AG04449 (cell line): ENCODE measurements at regions of chr20 and their contacts with region 1.

Region 1: DNA sequence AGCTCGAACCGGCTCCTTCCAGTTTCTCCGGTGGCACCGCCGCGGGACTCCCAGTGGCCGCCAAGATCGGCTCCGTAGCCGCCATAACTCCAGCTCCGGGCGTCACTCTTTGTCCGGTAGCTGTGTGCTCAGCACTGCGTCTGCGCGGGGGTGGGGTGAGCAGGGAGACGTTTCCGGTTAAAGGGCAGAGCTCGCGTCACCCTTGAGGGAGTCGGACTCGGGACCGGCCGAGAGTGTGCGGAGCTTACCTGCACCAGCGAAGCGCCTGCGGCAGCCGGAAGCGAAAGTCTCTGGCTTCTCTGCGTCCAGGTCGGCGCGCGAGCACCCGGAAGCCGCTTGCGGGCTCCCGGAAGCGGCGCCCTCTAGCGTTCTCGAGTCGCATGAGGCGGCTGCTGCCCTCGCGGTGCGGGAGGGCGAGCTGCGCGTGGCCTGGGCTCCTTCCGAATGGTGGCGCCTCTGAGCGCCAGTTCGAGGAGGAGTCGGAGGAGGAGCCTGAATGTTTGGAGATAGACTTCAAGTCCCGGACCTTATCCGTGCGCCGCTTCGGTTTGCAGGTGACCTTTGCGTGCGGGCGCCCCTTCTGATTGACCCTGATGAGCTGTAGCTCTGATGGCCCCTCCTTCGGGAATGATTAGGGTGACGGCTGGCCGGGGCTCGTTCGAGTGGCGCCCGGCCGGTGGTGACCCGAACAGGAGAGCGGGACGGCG is at the start of gene SCAND1:
- DNase-seq: peak; percentile 80
- H3K4me3 ChIP-seq: peak within 1 kb of the TSS; percentile 95
- CTCF ChIP-seq: peak; percentile 100

Region 2: GRCh38 chr20:35447082-35447789 is 507.1 kb before region 1 on chr20:
- CTCF ChIA-PET with region 1: no interaction called
- POLR2A ChIA-PET with region 1: no interaction called
- DNase-seq: no peak
- H3K4me3 ChIP-seq: peak overlapping the region; percentile 23; the same call in 1 of the 2 replicates
- CTCF ChIP-seq: peak; percentile 91

Region 3: GRCh38 chr20:35741892-35742740 is 212.2 kb before region 1 on chr20 and contains the start of gene RBM39:
- CTCF ChIA-PET with region 1: interaction called, 9 read pairs
- POLR2A ChIA-PET with region 1: interaction called, 22 read pairs
- DNase-seq: peak; percentile 99
- H3K4me3 ChIP-seq: peak within 1 kb of the TSS; percentile 80
- CTCF ChIP-seq: peak; percentile 73

Region 4: DNA sequence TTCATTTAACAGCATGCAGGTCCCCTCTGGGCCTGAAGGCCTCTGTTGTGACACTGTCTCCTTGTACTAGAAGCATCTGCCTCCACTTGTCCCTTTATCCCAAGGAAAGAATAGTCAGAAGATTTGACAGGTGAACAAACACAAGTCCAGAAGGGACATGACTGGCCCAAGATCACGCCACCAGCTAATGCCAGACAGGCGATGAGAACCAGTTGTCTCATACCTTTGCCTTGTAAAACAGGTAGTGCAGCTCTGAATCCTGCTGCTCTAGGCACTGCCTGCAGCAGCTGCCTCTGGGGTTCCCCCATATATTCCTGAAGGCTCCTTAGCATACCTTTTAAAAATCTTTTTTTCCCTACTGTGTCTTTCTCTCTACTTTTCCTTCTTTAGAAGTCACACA is 25.1 kb before region 1 on chr20:
- CTCF ChIA-PET with region 1: interaction called, 11 read pairs
- POLR2A ChIA-PET with region 1: no interaction called
- DNase-seq: no peak
- H3K4me3 ChIP-seq: no peak overlapping the region
- CTCF ChIP-seq: no peak

Region 5: DNA sequence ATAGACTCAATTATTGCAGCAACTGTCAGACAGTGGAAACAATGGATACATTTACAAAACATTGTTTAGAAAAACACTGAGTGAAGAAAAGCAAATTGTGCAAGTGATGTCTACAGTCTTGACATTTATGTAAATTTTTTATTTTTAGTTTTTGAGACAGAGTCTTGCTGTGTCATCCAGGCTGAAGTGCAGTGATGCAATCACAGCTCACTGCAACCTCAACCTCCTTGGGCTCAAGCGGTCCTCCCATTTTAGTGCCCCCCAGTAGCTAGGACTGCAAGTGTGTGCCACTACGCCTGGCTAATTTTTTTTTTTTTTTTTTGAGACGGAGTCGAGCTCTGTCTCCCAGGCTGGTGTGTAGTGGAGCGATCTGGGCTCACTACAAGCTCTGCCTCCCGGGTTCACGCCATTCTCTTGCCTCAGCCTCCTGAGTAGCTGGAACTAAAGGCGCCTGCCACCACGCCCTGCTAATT is 23.7 kb after region 1 on chr20:
- CTCF ChIA-PET with region 1: interaction called, 148 read pairs
- POLR2A ChIA-PET with region 1: interaction called, 4 read pairs
- DNase-seq: no peak
- H3K4me3 ChIP-seq: no peak overlapping the region
- CTCF ChIP-seq: no peak

Region 6: DNA sequence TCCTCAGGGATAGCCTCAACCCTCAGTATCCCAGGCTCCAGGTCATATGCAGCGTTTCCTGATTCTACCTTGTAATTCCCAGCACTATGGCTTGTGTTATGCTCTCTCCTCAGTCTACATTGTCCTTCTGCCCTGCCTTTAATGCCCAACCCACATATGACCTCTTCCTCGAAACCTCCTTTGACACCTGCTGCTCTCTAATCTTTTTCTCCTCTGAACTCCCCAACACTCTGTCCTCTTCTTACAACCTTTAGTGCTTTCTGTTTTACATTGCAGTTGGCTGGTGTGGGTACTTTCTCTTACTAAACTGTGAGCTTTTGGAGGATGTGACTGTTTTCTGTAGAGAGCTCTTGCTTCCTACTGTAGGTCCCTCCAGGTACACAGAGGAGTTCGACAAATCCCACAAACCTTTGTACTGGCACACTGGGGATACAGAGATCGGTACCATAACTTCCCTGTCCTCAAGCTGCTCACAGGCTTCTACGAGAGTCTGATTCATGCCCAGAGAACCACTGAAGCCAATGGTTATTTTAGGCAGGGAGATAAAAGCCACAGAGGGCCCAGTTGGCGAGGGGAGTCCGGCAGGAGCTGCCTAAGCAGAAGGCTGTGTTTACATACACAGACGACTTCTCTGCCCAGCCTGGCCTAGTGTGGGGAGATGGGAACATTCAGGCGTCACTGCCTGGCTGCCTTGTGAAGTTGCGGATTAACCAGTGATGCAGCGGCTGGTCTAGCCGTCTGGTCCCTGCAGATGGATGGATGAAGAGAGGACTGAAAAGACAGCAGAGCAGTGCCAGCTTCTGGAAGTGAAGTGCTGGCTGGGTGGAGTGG is 191.7 kb after region 1 on chr20:
- CTCF ChIA-PET with region 1: interaction called, 79 read pairs
- POLR2A ChIA-PET with region 1: no interaction called
- DNase-seq: no peak
- H3K4me3 ChIP-seq: no peak overlapping the region
- CTCF ChIP-seq: no peak